PC-3 (cell line): ENCODE measurements at regions of chr3 and their contacts with region 1.

Region 1: GRCh38 chr3:165339753-165340152 is 143.6 kb upstream of the SLITRK3 start:
- DNase-seq: peak; percentile 43
- ATAC-seq: peak; percentile 67; the same call in 1 of the 2 replicates
- H3K4me3 ChIP-seq: no peak overlapping the region
- H3K27ac ChIP-seq: no peak overlapping the region
- H3K4me1 ChIP-seq: no peaks in the 10 kb centered on the region
- H3K27me3 ChIP-seq: no peaks in the 10 kb centered on the region
- CTCF ChIP-seq: peak; percentile 68

Region 2: GRCh38 chr3:165254812-165255211 is 84.9 kb before region 1 on chr3:
- CTCF ChIA-PET with region 1: interaction called, 6 read pairs
- POLR2A ChIA-PET with region 1: no interaction called
- intact Hi-C with region 1: loop called (anchors 5 kb)
- DNase-seq: peak; percentile 69
- ATAC-seq: peak; percentile 89
- H3K4me3 ChIP-seq: no peak overlapping the region
- H3K27ac ChIP-seq: no peak overlapping the region
- H3K4me1 ChIP-seq: peaks cover 4% of the 10 kb centered on the region
- H3K27me3 ChIP-seq: no peaks in the 10 kb centered on the region
- CTCF ChIP-seq: peak; percentile 69

Region 3: GRCh38 chr3:165283328-165283727 is 56.4 kb before region 1 on chr3:
- CTCF ChIA-PET with region 1: no interaction called
- POLR2A ChIA-PET with region 1: no interaction called
- intact Hi-C with region 1: no loop called
- DNase-seq: no peak
- ATAC-seq: no peak
- H3K4me3 ChIP-seq: no peak overlapping the region
- H3K27ac ChIP-seq: no peak overlapping the region
- H3K4me1 ChIP-seq: no peaks in the 10 kb centered on the region
- H3K27me3 ChIP-seq: no peaks in the 10 kb centered on the region
- CTCF ChIP-seq: no peak

Region 4: DNA sequence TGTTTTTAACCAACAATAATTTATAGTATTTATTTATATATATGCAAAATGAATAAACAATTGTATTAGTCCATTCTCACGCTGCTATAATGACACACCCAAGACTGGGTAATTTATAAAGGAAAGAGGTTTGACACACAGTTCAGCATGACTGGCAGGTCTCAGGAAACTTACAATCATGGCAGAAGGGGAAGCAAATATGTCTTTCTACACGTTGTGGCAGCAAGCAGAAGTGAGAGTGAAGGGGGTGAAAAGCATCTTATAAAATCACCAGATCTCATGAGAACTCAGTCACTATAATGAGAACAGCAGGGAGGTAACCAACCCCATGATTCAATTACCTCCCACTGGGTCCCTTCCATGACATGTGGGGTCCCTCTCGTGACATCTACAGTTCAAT is 19.3 kb after region 1 on chr3:
- CTCF ChIA-PET with region 1: no interaction called
- POLR2A ChIA-PET with region 1: no interaction called
- intact Hi-C with region 1: no loop called
- DNase-seq: no peak
- ATAC-seq: no peak
- H3K4me3 ChIP-seq: no peak overlapping the region
- H3K27ac ChIP-seq: no peak overlapping the region
- H3K4me1 ChIP-seq: no peaks in the 10 kb centered on the region
- H3K27me3 ChIP-seq: no peaks in the 10 kb centered on the region
- CTCF ChIP-seq: no peak